BJ (cell line): ENCODE measurements at regions of chr5 and their contacts with region 1.

Region 1: GRCh38 chr5:135551593-135552447 is 16.1 kb upstream of the NEUROG1 start:
- DNase-seq: no peak
- H3K4me3 ChIP-seq: no peak overlapping the region
- H3K27me3 ChIP-seq: peaks cover 20% of the 10 kb centered on the region
- CTCF ChIP-seq: peak; percentile 82

Region 2: GRCh38 chr5:135437796-135438560 is 113.8 kb before region 1 on chr5:
- CTCF ChIA-PET with region 1: interaction called, 11 read pairs
- POLR2A ChIA-PET with region 1: no interaction called
- DNase-seq: peak; percentile 78
- H3K4me3 ChIP-seq: no peak overlapping the region
- H3K27me3 ChIP-seq: no peaks in the 10 kb centered on the region
- CTCF ChIP-seq: peak; percentile 28

Region 3: DNA sequence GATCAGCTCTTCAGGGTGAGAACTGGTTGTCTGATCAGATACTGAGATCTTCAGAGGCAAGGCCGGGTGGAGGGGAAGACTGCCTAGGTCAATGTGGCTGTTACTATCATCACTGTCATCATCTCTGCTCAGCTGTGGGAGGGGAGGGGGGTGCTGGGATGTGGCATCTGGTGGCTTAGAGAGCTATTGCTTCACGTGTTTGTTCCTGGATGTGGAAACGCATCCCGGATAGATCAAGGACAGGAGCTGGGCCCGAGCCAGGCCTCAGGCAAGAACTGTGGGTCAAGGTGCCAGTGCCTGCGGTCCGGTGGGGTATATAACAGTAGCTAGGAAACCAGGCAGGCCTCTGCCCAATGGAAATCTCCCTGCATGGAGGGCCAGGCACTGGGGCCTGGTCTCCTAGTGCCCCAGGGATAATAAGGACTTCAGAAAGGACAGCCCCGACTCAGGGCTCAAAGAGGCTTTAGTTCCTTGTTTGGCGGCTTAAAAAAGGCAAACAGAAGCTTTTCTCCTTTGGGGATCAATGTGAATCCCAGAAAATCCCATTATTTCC is 69.4 kb before region 1 on chr5:
- CTCF ChIA-PET with region 1: interaction called, 1,147 read pairs
- POLR2A ChIA-PET with region 1: no interaction called
- DNase-seq: no peak
- H3K4me3 ChIP-seq: no peak overlapping the region
- H3K27me3 ChIP-seq: peaks cover 4% of the 10 kb centered on the region
- CTCF ChIP-seq: no peak

Region 4: GRCh38 chr5:135488727-135489465 is 62.9 kb before region 1 on chr5:
- CTCF ChIA-PET with region 1: interaction called, 21 read pairs
- POLR2A ChIA-PET with region 1: no interaction called
- DNase-seq: peak; percentile 10
- H3K4me3 ChIP-seq: peak overlapping the region; percentile 32
- H3K27me3 ChIP-seq: no peaks in the 10 kb centered on the region
- CTCF ChIP-seq: no peak

Region 5: GRCh38 chr5:135608761-135609443 is 57.1 kb after region 1 on chr5:
- CTCF ChIA-PET with region 1: no interaction called
- POLR2A ChIA-PET with region 1: no interaction called
- DNase-seq: no peak
- H3K4me3 ChIP-seq: no peak overlapping the region
- H3K27me3 ChIP-seq: no peaks in the 10 kb centered on the region
- CTCF ChIP-seq: no peak

Region 6: GRCh38 chr5:135821061-135821801 is 269.4 kb after region 1 on chr5:
- CTCF ChIA-PET with region 1: interaction called, 11 read pairs
- POLR2A ChIA-PET with region 1: no interaction called
- DNase-seq: no peak
- H3K4me3 ChIP-seq: no peak overlapping the region
- H3K27me3 ChIP-seq: no peaks in the 10 kb centered on the region; the same call in 1 of the 2 replicates
- CTCF ChIP-seq: no peak

Region 7: GRCh38 chr5:135829681-135830383 is 278.0 kb after region 1 on chr5:
- CTCF ChIA-PET with region 1: interaction called, 108 read pairs
- POLR2A ChIA-PET with region 1: no interaction called
- DNase-seq: no peak
- H3K4me3 ChIP-seq: no peak overlapping the region
- H3K27me3 ChIP-seq: peaks cover 14% of the 10 kb centered on the region
- CTCF ChIP-seq: peak; percentile 82